Heart left ventricle (tissue), 16 donors: ENCODE measurements at regions of chr18 and their contacts with region 1.

Region 1: DNA sequence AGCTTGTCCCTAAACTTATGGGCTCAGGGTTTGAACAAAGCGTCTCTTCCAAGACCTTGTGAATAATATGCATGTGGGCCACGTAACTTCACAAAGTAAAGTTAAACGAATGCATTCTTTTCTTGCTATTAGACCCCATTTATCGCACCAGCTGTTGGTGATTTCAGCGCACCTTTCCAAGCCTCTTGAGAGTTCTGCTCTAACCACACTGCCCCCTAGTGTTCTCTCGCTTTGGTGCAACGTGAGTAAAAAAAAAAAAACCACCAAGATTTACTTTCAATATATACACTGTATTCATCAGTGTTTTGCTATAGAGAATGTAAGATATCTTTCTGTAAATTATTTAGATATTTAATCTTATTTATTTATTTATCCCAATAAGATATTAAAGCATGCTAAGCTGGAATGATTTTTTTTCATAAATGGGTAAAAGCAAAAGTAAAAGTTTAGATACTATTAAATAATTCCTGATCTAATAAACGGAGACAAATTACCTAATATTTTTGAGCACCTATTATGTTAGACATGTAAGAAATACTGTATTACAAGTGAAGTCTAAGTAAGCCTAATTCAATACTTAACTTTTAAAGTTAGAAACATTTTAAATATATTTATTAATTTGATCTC is 459.5 kb downstream of the DLGAP1 start:
- DNase-seq: peak in 4 of 5 donors; percentile 30 to 46 (median 38)
- ATAC-seq: peak in 3 of 4 donors; percentile 44 to 72 (median 64)
- H3K4me3 ChIP-seq: peak overlapping the region in 2 of 12 donors; percentile 8 to 11
- H3K27ac ChIP-seq: peak overlapping the region in 1 of 12 donors; percentile 84
- H3K4me1 ChIP-seq: peaks cover 0 to 18% (median 0%) of the 10 kb centered on the region in 12 donors
- H3K27me3 ChIP-seq: no peaks in the 10 kb centered on the region
- CTCF ChIP-seq: peak; percentile 80 to 93 (median 88)
- POLR2A ChIP-seq: no peak

Region 2: GRCh38 chr18:3771121-3771971 is 224.2 kb before region 1 on chr18:
- intact Hi-C with region 1: loop called (anchors 1 to 5 kb)
- DNase-seq: peak; percentile 82 to 91 (median 84)
- ATAC-seq: peak; percentile 97 to 100 (median 100)
- H3K4me3 ChIP-seq: peak overlapping the region in 11 of 12 donors; percentile 1 to 53 (median 43)
- H3K27ac ChIP-seq: peak overlapping the region in 9 of 12 donors; percentile 18 to 70 (median 59)
- H3K4me1 ChIP-seq: peaks cover 0 to 9% (median 2%) of the 10 kb centered on the region in 12 donors
- H3K27me3 ChIP-seq: no peaks in the 10 kb centered on the region
- CTCF ChIP-seq: peak; percentile 93 to 99 (median 96)
- POLR2A ChIP-seq: no peak

Region 3: DNA sequence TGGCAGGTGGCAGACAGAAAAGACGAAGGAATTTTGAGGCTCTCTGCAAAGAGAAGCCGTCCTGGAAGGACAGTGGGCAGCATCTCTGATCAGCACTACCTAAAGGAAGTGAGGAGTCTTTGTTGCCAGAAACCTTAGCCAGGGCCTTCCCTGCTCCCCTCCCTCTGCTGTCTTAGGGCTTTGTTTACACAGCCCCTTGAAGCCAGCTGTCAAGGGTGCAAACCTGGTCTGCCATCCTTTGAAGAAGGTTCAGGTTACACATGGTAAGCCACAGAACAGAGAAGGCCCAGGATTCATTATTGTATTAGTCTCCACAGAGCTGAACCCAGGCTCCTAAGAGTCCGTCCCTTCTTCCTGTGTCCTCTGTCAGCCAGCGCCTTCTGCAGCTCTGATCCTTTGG is 188.9 kb before region 1 on chr18:
- intact Hi-C with region 1: no loop called
- DNase-seq: no peak
- ATAC-seq: no peak
- H3K4me3 ChIP-seq: no peak overlapping the region
- H3K27ac ChIP-seq: no peak overlapping the region
- H3K4me1 ChIP-seq: no peaks in the 10 kb centered on the region
- H3K27me3 ChIP-seq: no peaks in the 10 kb centered on the region
- CTCF ChIP-seq: no peak
- POLR2A ChIP-seq: no peak

Region 4: DNA sequence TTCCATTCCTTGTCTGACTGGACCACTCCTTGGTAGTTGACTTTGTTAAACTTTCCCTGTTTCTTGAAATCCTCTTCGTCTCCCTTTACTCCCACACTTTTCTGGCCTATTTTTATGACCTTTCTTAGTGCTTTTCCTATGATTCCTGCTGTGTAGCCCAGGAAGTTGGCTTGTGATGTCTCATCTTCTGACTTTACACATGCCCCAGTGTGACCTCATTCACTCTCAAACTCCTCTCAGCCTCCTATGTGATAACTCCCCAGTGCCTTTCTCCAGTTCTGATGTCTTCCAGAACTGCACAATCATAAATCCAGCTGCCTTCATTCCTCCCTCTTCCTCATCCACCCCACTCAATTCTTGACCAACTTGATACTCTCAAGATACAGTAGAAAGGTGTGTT is 138.0 kb before region 1 on chr18:
- intact Hi-C with region 1: loop called in 1 of 10 experiments (anchors 5 kb)
- DNase-seq: no peak
- ATAC-seq: no peak
- H3K4me3 ChIP-seq: no peak overlapping the region
- H3K27ac ChIP-seq: no peak overlapping the region
- H3K4me1 ChIP-seq: no peaks in the 10 kb centered on the region
- H3K27me3 ChIP-seq: no peaks in the 10 kb centered on the region
- CTCF ChIP-seq: no peak
- POLR2A ChIP-seq: no peak

Region 5: DNA sequence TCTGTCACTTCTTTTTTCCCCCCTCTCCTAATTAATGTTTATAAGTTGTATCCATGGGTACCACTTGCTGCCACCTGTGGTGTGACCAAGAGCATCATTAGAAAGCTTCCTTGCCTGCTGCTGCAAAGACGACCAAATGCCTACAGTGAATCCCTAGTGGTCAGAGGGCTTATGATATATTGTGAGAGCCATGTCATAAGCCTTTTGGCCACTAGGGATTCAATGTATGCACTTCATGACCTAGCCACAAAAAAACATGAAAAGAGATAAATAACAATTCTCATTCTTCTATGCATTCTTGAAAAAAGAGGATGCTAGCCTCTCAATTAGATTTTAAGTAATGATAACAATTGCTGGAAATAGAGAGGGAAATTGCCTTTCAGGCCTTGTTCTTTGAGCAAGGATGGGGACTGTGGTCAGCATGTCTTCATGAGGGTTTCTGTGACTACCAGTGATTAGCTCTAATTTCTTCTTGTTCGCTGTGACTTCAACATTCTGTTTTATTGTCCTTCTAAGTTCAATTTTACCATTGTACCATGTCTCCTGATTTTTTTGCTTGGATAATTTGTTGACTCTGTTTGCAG is 110.3 kb before region 1 on chr18:
- intact Hi-C with region 1: loop called in 1 of 10 experiments (anchors 5 kb)
- DNase-seq: no peak
- ATAC-seq: no peak
- H3K4me3 ChIP-seq: no peak overlapping the region
- H3K27ac ChIP-seq: peak overlapping the region in 1 of 12 donors; percentile 55
- H3K4me1 ChIP-seq: peaks cover 0 to 40% (median 9%) of the 10 kb centered on the region in 12 donors
- H3K27me3 ChIP-seq: no peaks in the 10 kb centered on the region
- CTCF ChIP-seq: peak in 3 of 12 donors; percentile 9 to 34 (median 28)
- POLR2A ChIP-seq: no peak

Region 6: DNA sequence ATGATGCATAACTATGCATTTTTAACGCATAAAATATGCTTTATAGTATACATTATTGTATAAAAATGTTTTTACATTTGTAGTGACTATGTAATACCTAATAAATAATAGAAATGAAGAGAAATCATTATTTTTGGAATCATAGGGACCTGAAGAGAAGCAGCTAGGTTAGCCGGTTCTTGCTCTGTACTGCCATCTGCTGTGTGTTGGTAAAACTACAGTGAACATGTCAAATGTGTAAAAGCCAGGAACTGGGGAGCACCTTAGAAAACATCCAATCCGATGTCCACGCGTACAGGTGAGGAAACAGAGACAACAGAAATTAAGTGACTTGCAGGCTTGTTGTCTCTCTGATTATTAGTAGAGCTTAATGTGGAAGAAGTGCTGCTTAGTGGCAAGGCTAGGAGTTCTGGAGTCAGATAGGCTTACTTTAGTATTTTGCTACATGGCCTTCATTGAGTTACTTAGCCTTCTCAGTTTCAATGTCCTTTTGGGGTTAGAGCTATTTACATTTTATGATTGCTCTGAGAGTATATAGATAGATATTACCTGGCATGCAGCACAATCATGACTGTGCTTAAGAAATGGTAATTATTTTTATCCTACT is 73.1 kb after region 1 on chr18:
- intact Hi-C with region 1: loop called in 2 of 10 experiments (anchors 5 to 10 kb)
- DNase-seq: peak in 2 of 5 donors; percentile 12 to 22
- ATAC-seq: no peak
- H3K4me3 ChIP-seq: no peak overlapping the region
- H3K27ac ChIP-seq: no peak overlapping the region
- H3K4me1 ChIP-seq: no peaks in the 10 kb centered on the region
- H3K27me3 ChIP-seq: no peaks in the 10 kb centered on the region
- CTCF ChIP-seq: peak; percentile 61 to 80 (median 73)
- POLR2A ChIP-seq: no peak

Region 7: GRCh38 chr18:4106407-4107033 is 110.9 kb after region 1 on chr18:
- intact Hi-C with region 1: no loop called
- DNase-seq: peak; percentile 29 to 62 (median 42)
- ATAC-seq: peak in 1 of 4 donors; percentile 29
- H3K4me3 ChIP-seq: peak overlapping the region in 1 of 12 donors; percentile 8
- H3K27ac ChIP-seq: no peak overlapping the region
- H3K4me1 ChIP-seq: no peaks in the 10 kb centered on the region
- H3K27me3 ChIP-seq: no peaks in the 10 kb centered on the region
- CTCF ChIP-seq: peak; percentile 66 to 85 (median 74)
- POLR2A ChIP-seq: no peak